ENCODE measurements at regions of chr1 and their contacts with region 1.

Region 1: GRCh38 chr1:37989361-37989930 is 376 bp downstream of the SF3A3 start:
- DNase-seq: no peak
- CTCF ChIP-seq: no peak

Region 2: GRCh38 chr1:37965301-37965700 is 24.1 kb before region 1 on chr1:
- CTCF ChIA-PET with region 1: no interaction called
- POLR2A ChIA-PET with region 1: no interaction called
- DNase-seq: no peak
- CTCF ChIP-seq: no peak

Region 3: DNA sequence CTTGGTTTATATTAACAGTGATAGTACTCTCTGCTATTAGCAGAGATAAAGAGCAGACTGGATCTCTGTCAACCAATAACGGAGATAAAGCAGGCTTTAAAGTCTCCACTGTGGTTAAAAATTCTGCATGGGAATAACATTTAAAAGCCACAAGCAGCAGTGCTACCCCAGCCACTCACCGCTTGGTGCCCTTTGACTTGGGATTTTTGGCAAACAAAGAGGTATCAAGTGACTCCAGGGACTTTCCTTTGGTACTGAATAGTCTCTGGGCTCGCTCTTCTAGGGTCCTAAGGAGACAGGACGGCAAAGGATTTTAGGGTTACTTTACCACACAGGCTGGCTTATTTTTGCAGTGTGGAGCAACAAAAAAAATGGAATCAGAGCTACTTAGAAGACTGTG is 10.9 kb before region 1 on chr1:
- CTCF ChIA-PET with region 1: interaction called, 11 read pairs
- POLR2A ChIA-PET with region 1: no interaction called
- DNase-seq: no peak
- CTCF ChIP-seq: no peak

Region 4: DNA sequence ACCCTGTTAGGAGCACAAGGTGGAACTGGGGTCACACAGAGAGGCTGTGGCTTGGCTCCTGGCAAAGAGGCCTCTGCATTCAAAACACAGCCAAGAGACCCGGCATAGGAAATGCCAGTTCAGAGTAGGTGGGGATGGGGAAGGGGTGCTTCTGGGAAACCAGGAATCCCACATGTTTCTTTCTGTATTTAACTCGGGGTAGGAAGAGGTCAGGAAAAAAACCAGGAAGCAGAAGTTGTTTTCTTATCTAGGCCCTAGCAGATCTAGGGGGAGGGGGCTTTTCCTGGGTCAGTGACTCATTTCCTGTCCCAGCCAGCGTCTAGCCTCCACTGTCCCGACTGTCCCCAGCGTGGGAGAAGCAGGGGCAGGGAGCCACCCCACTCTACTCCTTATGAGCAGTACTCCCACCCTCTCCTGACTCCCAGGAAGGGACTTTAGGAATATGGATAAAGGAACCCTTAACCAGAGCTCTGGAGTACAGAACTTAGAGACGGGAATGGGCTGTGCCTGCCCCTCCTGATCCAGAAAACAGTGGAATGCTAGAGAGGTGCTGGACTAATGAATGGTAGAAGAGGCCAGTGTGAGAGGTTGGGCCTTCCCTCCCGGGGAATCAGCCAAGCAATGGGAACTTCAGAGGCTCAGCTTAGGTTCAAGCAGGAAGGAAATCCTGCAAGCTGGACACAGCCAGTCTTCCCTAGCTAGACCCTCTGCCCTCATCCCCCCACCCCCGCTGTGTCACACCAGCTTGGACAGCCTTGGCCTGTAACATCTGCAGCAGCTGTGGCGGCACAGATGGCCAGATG is 10.2 kb after region 1 on chr1:
- CTCF ChIA-PET with region 1: interaction called, 51 read pairs
- POLR2A ChIA-PET with region 1: no interaction called
- DNase-seq: no peak
- CTCF ChIP-seq: no peak

Region 5: GRCh38 chr1:38012363-38013226 is 23.1 kb after region 1 on chr1 and contains the start of gene UTP11:
- CTCF ChIA-PET with region 1: interaction called, 18 read pairs
- POLR2A ChIA-PET with region 1: no interaction called
- DNase-seq: peak; percentile 95
- CTCF ChIP-seq: no peak

Region 6: DNA sequence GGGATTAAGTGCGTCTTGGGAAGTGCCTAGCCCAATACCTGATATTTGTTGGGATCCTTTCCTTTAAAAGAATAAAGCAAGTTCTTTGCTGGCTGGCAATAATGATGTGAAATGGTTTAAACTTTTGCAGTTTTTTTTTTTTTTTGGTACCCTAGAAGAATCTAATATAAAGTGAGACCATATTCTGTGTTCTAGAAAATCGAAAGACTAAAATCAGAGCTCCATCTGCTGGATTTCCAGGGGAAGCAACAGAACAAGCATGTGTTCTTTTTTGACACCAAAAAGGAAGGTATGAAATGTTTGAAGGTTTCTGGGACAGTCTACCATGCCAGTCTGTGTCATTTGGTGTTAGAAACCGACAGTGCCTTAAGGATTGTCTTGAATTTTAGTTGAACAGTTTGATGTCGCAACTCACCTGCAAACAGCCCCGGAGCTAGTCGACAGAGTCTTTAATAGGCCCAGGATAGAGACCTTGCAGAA is 29.5 kb after region 1 on chr1:
- CTCF ChIA-PET with region 1: interaction called, 18 read pairs
- POLR2A ChIA-PET with region 1: no interaction called
- DNase-seq: no peak
- CTCF ChIP-seq: peak; percentile 63